ENCODE measurements at regions of chr1 and their contacts with region 1.

Region 1: GRCh38 chr1:70043806-70044205 is 161.6 kb downstream of the LRRC40 start:
- DNase-seq: peak; percentile 61
- H3K4me3 Mint-ChIP-seq: no peak overlapping the region
- H3K27ac Mint-ChIP-seq: no peak overlapping the region
- H3K4me1 Mint-ChIP-seq: peaks cover 25% of the 10 kb centered on the region
- H3K27me3 Mint-ChIP-seq: no peaks in the 10 kb centered on the region
- CTCF ChIP-seq: no peak

Region 2: DNA sequence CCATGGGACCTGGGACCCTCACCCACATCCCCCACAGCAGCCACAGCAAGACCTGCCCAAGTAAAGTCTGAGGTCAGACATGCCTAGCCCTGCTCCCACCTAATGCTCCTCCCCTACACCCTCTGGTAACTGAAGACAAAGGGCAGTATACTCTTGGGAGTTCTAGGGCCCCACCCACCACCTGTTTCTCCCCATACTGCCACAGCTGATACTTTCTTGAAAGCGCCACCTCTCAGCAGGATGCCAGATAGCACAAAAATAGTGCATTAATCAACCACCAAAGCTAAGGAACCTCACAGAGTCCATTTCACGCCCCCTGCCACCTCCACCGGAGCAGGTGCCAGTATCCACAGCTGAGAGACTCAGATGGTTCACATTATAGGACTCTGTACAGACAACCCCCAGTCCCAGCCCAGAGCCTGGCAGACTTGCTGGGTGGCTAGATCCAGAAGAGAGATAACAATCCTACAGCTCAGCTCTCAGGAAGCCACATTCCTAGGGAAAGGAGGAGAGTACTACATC is 76.5 kb before region 1 on chr1:
- CTCF ChIA-PET with region 1: no interaction called
- intact Hi-C with region 1: loop called (anchors 2 kb)
- DNase-seq: peak; percentile 30
- H3K4me3 Mint-ChIP-seq: peak overlapping the region; percentile 47
- H3K27ac Mint-ChIP-seq: peak overlapping the region; percentile 81
- H3K4me1 Mint-ChIP-seq: peaks cover 19% of the 10 kb centered on the region
- H3K27me3 Mint-ChIP-seq: no peaks in the 10 kb centered on the region
- CTCF ChIP-seq: no peak

Region 3: DNA sequence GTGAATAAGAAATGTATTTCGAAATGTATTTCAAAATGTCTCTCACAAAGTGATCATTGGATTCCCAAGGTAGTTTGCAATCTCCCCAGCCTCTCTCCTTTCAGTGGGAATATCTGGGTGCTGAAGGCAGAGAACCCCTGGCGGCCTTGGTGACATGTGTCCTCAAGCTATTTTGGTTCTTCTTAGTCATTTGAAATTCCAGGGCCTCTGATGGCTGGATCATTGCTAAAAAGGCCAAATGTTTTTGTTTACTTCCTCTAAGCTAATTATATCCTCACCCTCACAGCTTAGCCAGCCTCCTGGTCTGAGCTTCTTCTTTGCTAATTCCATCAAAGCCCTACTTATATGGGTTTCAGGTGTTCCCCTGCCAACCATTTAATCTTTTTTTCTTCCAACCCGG is 90.3 kb after region 1 on chr1:
- CTCF ChIA-PET with region 1: no interaction called
- intact Hi-C with region 1: loop called (anchors 5 kb)
- DNase-seq: no peak
- H3K4me3 Mint-ChIP-seq: no peak overlapping the region
- H3K27ac Mint-ChIP-seq: no peak overlapping the region
- H3K4me1 Mint-ChIP-seq: no peaks in the 10 kb centered on the region
- H3K27me3 Mint-ChIP-seq: no peaks in the 10 kb centered on the region
- CTCF ChIP-seq: no peak

Region 4: GRCh38 chr1:70146488-70146887 is 102.7 kb after region 1 on chr1:
- CTCF ChIA-PET with region 1: no interaction called
- intact Hi-C with region 1: no loop called
- DNase-seq: no peak
- H3K4me3 Mint-ChIP-seq: no peak overlapping the region
- H3K27ac Mint-ChIP-seq: no peak overlapping the region
- H3K4me1 Mint-ChIP-seq: no peaks in the 10 kb centered on the region
- H3K27me3 Mint-ChIP-seq: no peaks in the 10 kb centered on the region
- CTCF ChIP-seq: no peak